GM18951 (cell line): ENCODE measurements at regions of chr14 and their contacts with region 1.

Region 1: DNA sequence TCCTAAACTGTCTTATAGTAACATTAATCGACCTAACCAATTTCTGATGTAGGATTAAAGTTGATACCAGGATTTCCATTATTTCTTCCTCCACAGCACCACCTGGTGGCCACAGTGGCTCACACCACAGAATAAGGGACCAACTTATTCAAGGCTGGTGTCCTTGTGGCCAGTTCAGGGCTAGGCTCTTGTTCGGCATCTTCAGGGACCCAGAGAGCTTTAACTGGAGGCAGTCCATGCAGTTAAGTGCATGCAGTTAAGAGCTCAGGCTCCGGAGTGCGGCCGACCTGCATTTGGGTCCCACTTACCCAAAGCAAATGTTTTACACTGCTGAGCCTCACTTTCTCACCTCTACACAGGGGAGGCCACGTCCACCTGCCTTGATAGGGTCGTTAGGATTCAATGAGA is 42.0 kb upstream of the GPR68 start:
- POLR2A ChIP-seq: no peak

Region 2: GRCh38 chr14:90903101-90903500 is 383.4 kb before region 1 on chr14:
- in situ Hi-C with region 1: loop called (anchors 25 kb)
- POLR2A ChIP-seq: no peak